BJ (cell line): ENCODE measurements at regions of chr10 and their contacts with region 1.

Region 1: GRCh38 chr10:100508691-100509150 is 10.9 kb downstream of the SEC31B start:
- DNase-seq: no peak
- H3K4me3 ChIP-seq: no peak overlapping the region
- H3K27me3 ChIP-seq: no peaks in the 10 kb centered on the region
- CTCF ChIP-seq: peak; percentile 73

Region 2: GRCh38 chr10:100438674-100439315 is 69.9 kb before region 1 on chr10:
- CTCF ChIA-PET with region 1: interaction called, 68 read pairs
- POLR2A ChIA-PET with region 1: no interaction called
- DNase-seq: no peak
- H3K4me3 ChIP-seq: no peak overlapping the region
- H3K27me3 ChIP-seq: no peaks in the 10 kb centered on the region; the same call in 1 of the 2 replicates
- CTCF ChIP-seq: no peak

Region 3: GRCh38 chr10:100496567-100496966 is 12.2 kb before region 1 on chr10:
- CTCF ChIA-PET with region 1: interaction called, 15 read pairs
- POLR2A ChIA-PET with region 1: no interaction called
- DNase-seq: no peak
- H3K4me3 ChIP-seq: no peak overlapping the region
- H3K27me3 ChIP-seq: no peaks in the 10 kb centered on the region
- CTCF ChIP-seq: no peak

Region 4: DNA sequence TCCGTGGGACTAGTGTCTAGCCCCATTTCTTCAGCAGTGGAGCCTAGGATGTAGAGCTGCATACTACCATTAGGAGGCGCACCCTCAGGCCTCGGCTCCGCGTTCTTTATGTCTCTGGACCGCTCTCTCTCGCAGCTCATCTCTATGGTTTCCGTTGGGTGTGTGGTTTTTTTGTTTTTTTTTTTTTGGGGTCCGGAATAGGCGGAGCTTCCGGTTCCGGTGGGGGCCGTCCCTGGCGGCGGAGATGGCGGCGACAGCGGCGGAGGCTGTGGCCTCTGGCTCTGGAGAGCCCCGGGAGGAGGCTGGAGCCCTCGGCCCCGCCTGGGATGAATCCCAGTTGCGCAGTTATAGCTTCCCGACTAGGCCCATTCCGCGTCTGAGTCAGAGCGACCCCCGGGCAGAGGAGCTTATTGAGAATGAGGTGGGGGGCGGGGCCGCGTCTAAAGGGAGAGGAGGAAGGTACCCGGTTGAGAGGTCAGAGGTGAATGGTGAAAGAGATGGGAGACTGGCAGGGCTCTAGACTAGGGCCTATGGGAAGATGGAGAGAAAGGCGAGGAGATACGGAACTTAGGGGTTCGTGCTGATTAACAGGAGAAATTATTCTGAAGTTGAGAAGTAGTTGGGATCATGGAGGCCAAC is 27.1 kb after region 1 on chr10 and contains the start of gene HIF1AN:
- CTCF ChIA-PET with region 1: interaction called, 10 read pairs
- POLR2A ChIA-PET with region 1: no interaction called
- DNase-seq: peak; percentile 54
- H3K4me3 ChIP-seq: peak within 1 kb of the TSS; percentile 69
- H3K27me3 ChIP-seq: no peaks in the 10 kb centered on the region
- CTCF ChIP-seq: peak; percentile 98
- polyA plus RNA-seq, gene HIF1AN: 7.4 and 19.5 TPM in 2 replicates